Mammary epithelial cell (primary cell): ENCODE measurements at regions of chr1 and their contacts with region 1.

Region 1: GRCh38 chr1:152047730-152048402 is 11.1 kb upstream of the S100A11 start:
- DNase-seq: peak; percentile 99
- H3K4me3 ChIP-seq: peak overlapping the region; percentile 6 to 37 (median 25)
- H3K27ac ChIP-seq: peak overlapping the region; percentile 98
- H3K4me1 ChIP-seq: peaks cover 74% of the 10 kb centered on the region
- H3K27me3 ChIP-seq: no peaks in the 10 kb centered on the region
- CTCF ChIP-seq: peak; percentile 27 to 46

Region 2: GRCh38 chr1:151945725-151946364 is 102.0 kb before region 1 on chr1:
- CTCF ChIA-PET with region 1: interaction called, 3 read pairs
- dilution Hi-C with region 1: no loop called
- in situ Hi-C with region 1: no loop called
- intact Hi-C with region 1: loop called (anchors 1 kb)
- DNase-seq: peak; percentile 98
- H3K4me3 ChIP-seq: peak overlapping the region in 2 of 3 experiments; percentile 5 to 11
- H3K27ac ChIP-seq: peak overlapping the region; percentile 99
- H3K4me1 ChIP-seq: peaks cover 47% of the 10 kb centered on the region
- H3K27me3 ChIP-seq: no peaks in the 10 kb centered on the region
- CTCF ChIP-seq: no peak

Region 3: DNA sequence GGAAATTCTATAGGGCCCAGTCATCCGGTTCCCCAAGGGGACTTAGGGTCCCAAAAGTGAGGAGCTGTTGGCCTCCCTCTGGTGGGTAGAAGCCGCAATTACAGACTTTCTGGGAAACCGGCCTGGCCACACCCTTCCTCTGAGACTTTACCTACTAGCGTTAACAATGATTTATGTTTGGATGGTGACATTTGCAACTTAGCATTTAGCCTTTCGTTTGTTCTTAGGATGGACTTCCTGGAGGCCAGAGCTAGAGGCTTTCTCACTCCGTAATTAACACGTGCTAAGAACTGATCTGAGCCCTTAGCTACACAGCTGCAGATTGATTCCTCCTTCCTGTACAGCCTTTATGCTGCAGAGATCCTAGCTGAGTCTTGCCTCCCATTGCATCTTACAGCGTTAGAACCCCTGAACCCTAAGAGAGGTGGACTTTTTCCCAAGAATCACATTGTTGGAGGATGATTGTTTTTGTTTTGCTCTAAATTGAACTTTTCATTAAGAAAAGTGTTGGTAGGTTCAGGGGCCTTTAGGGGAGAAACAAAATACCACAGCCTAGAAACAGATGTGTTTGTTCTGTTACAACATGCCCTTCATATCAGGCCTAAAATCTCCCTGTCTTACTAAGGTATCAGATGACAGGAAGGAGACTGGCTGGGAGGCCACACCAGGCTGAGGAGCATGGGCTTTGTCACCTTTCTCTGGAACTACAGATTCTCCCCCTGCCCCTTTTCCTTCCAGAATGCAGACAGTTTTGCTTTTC is 13.0 kb before region 1 on chr1:
- CTCF ChIA-PET with region 1: no interaction called
- dilution Hi-C with region 1: no loop called
- in situ Hi-C with region 1: no loop called
- intact Hi-C with region 1: loop called (anchors 1 kb)
- DNase-seq: peak; percentile 82
- H3K4me3 ChIP-seq: peak overlapping the region; percentile 90 to 99 (median 95)
- H3K27ac ChIP-seq: peak overlapping the region; percentile 95
- H3K4me1 ChIP-seq: peaks cover 23% of the 10 kb centered on the region
- H3K27me3 ChIP-seq: no peaks in the 10 kb centered on the region
- CTCF ChIP-seq: peak; percentile 71 to 81

Region 4: DNA sequence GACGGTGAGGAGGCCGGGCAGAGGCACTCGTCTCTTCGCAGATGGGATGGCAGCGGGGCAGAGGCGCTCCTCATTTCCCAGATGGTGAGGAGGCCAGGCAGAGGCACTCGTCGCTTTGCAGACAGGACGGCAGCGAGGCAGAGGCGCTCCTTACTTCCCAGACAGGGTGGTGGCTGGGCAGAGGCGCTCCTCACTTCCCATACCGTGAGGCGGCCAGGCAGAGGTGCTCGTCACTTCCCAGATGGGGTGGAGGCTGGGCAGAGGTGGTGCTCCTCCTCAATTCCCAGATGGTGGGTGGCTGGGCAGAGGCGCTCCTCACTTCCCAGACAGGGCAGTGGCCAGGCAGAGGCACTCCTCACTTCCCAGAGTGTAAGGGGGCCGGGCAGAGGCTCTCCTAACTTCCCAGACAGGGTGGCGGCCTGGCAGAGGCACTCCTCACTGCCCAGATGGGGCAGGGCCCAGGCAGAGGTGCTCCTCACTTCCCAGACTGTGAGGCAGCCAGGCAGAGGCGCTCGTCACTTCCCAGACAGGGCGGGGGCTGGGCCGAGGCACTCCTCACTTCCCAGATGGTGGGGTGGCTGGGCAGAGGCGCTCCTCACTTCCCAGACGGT is 31.1 kb after region 1 on chr1:
- CTCF ChIA-PET with region 1: no interaction called
- dilution Hi-C with region 1: no loop called
- in situ Hi-C with region 1: no loop called
- intact Hi-C with region 1: no loop called
- DNase-seq: no peak
- H3K4me3 ChIP-seq: no peak overlapping the region
- H3K27ac ChIP-seq: no peak overlapping the region
- H3K4me1 ChIP-seq: no peaks in the 10 kb centered on the region
- H3K27me3 ChIP-seq: peaks cover 11% of the 10 kb centered on the region
- CTCF ChIP-seq: no peak

Region 5: DNA sequence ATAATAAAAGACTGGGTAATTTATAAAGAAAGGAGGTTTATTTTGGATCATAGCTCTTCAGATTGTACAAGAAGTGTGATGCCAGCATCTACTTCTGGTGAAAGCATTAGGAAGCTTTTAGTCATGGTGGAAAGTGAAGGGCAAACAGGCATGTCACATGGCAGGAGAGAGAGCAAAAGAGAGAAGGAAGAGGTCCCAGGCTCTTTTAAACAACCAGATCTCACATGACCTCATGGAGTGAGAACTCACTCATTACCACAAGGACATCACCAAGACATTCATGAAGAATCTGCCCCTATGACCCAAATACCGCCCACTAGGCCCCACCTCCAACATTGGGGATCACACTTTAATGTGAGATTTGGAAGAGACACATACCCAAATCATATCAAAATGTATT is 101.1 kb after region 1 on chr1:
- CTCF ChIA-PET with region 1: no interaction called
- dilution Hi-C with region 1: loop called (anchors 5 kb)
- in situ Hi-C with region 1: no loop called
- intact Hi-C with region 1: no loop called
- DNase-seq: no peak
- H3K4me3 ChIP-seq: no peak overlapping the region
- H3K27ac ChIP-seq: no peak overlapping the region
- H3K4me1 ChIP-seq: no peaks in the 10 kb centered on the region
- H3K27me3 ChIP-seq: no peaks in the 10 kb centered on the region
- CTCF ChIP-seq: no peak

Region 6: GRCh38 chr1:152189657-152190442 is 142.0 kb after region 1 on chr1:
- CTCF ChIA-PET with region 1: no interaction called
- dilution Hi-C with region 1: no loop called
- in situ Hi-C with region 1: no loop called
- intact Hi-C with region 1: loop called (anchors 1 kb)
- DNase-seq: peak; percentile 66
- H3K4me3 ChIP-seq: peak overlapping the region in 1 of 3 experiments; percentile 41
- H3K27ac ChIP-seq: no peak overlapping the region
- H3K4me1 ChIP-seq: peaks cover 49% of the 10 kb centered on the region
- H3K27me3 ChIP-seq: no peaks in the 10 kb centered on the region
- CTCF ChIP-seq: peak; percentile 81 to 84

Region 7: GRCh38 chr1:152356736-152357135 is 308.9 kb after region 1 on chr1:
- CTCF ChIA-PET with region 1: no interaction called
- dilution Hi-C with region 1: no loop called
- in situ Hi-C with region 1: loop called in 1 of 2 experiments (anchors 10 kb)
- intact Hi-C with region 1: no loop called
- DNase-seq: no peak
- H3K4me3 ChIP-seq: no peak overlapping the region
- H3K27ac ChIP-seq: no peak overlapping the region
- H3K4me1 ChIP-seq: peaks cover 3% of the 10 kb centered on the region
- H3K27me3 ChIP-seq: peaks cover 2% of the 10 kb centered on the region
- CTCF ChIP-seq: no peak

Region 8: DNA sequence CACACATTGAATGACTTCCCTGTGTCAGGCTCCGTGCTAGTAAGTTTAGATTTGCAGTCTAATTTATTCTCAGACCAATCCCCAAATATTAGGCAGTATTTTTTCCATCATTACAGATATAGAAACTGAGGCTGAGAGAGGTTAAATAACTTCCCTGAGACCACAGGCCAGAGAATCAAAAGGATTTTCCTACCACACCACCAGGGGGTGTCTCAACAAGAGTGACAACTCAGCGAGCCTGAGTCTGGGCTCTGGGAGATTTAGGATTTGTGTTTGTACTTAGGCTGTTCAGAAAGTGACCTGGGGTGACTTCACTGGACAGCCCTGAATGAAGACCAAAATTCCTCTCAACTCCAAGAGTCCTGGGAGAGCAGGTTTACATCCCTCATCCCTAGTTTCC is 449.4 kb after region 1 on chr1:
- CTCF ChIA-PET with region 1: no interaction called
- dilution Hi-C with region 1: no loop called
- in situ Hi-C with region 1: no loop called
- intact Hi-C with region 1: no loop called
- DNase-seq: no peak
- H3K4me3 ChIP-seq: no peak overlapping the region
- H3K27ac ChIP-seq: no peak overlapping the region
- H3K4me1 ChIP-seq: peaks cover 12% of the 10 kb centered on the region
- H3K27me3 ChIP-seq: no peaks in the 10 kb centered on the region
- CTCF ChIP-seq: peak; percentile 54 to 77